Caco-2 (cell line): ENCODE measurements at regions of chr10 and their contacts with region 1.

Region 1: DNA sequence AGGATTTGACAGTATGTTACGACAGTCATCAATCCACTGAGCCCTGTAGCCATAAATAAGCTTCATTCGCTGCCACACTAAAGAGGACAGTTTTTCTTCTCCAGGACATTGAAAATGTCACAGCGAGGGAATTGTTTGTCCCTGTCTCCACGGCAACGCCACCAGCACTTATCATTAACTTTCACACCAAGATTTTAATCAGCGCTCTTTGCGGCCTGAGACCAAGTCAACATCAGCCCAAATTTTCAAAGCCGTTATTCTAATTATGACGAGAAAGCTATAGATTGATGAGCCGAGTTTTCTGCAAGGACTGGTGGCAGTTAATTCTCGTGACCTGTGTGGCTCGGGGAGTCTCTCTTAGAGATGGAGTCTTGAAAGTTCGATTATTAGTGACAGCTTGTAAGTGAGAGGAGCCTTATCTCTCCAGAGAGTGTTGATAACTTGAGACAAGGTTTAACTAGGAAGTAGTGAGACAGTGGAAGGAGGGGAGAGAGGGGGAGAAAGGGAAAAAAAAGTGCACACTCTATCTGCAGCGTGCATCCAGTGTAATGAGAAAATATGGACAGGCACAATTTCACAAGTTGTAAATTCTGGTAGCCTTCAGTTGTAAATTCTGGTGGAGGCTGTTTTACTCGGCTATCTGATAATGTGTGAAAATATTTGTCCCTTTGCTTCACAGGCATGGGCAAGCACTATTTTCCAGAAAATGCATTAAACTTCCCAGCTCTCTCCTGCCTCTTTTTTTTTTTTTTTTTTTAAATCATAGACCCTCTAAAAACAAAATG is 473.3 kb downstream of the LRMDA start:
- DNase-seq: peak in 1 of 2 experiments; percentile 25
- H3K4me3 ChIP-seq: no peak overlapping the region
- H3K4me3 Mint-ChIP-seq: peak overlapping the region; percentile 38
- H3K27ac Mint-ChIP-seq: peak overlapping the region; percentile 5
- H3K4me1 ChIP-seq: peaks cover 10% of the 10 kb centered on the region; the same call in 1 of the 2 replicates
- H3K4me1 Mint-ChIP-seq: peaks cover 26% of the 10 kb centered on the region
- H3K27me3 ChIP-seq: no peaks in the 10 kb centered on the region
- H3K27me3 Mint-ChIP-seq: no peaks in the 10 kb centered on the region
- CTCF ChIP-seq: no peak

Region 2: DNA sequence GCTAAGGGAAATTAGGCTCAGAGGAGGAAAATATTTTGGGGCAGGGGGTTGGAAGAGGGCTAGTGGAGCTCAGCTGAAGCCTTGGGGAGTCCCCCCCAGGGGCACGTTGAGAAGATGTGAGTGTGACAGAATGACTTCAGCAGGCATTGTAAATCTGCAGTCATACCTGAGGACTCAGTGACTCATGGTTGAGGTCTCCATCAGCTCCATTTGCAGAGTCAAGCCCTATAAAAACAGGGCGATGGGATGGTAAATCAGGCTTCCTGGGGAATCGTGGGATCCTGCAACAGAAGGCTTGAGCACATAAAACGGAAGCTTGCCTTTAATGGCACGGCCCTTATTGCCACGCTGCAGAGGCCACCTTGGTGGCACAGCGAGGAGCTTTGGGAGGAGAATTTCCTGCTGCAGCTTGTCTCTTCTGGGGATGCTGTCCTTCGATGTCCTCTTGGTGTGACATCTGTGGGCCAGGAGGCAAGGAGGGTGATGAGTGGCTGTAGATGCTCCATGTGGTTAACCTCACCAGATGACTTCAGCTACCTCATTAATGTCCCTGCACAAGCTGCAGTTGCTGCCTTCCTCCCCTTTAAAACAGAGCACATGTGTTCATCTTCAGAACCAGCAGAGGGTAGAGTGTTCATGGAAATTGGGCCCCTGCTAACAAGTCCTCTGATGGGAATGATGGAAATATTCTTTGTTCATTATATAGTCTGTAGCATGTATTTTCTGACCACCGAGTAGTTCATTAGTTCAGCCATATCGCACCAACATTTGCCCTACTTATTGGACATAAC is 187.4 kb before region 1 on chr10:
- CTCF ChIA-PET with region 1: no interaction called
- POLR2A ChIA-PET with region 1: no interaction called
- intact Hi-C with region 1: loop called (anchors 10 kb)
- DNase-seq: peak in 1 of 2 experiments; percentile 12
- H3K4me3 ChIP-seq: no peak overlapping the region
- H3K4me3 Mint-ChIP-seq: no peak overlapping the region
- H3K27ac Mint-ChIP-seq: no peak overlapping the region
- H3K4me1 ChIP-seq: no peaks in the 10 kb centered on the region
- H3K4me1 Mint-ChIP-seq: no peaks in the 10 kb centered on the region
- H3K27me3 ChIP-seq: no peaks in the 10 kb centered on the region
- H3K27me3 Mint-ChIP-seq: no peaks in the 10 kb centered on the region
- CTCF ChIP-seq: peak; percentile 15 to 41

Region 3: GRCh38 chr10:75788394-75789205 is 116.1 kb before region 1 on chr10:
- CTCF ChIA-PET with region 1: no interaction called
- POLR2A ChIA-PET with region 1: no interaction called
- intact Hi-C with region 1: loop called (anchors 5 kb)
- DNase-seq: no peak
- H3K4me3 ChIP-seq: no peak overlapping the region
- H3K4me3 Mint-ChIP-seq: no peak overlapping the region
- H3K27ac Mint-ChIP-seq: peak overlapping the region; percentile 55
- H3K4me1 ChIP-seq: peaks cover 12% of the 10 kb centered on the region
- H3K4me1 Mint-ChIP-seq: peaks cover 30% of the 10 kb centered on the region
- H3K27me3 ChIP-seq: no peaks in the 10 kb centered on the region
- H3K27me3 Mint-ChIP-seq: no peaks in the 10 kb centered on the region
- CTCF ChIP-seq: no peak